Posterior cingulate gyrus (tissue), 11 donors: ENCODE measurements at regions of chr16 and their contacts with region 1.

Region 1: GRCh38 chr16:9660898-9661297 is 521.3 kb downstream of the GRIN2A start:
- DNase-seq: no peak

Region 2: GRCh38 chr16:9612267-9612666 is 48.6 kb before region 1 on chr16:
- intact Hi-C with region 1: loop called (anchors 5 kb)
- DNase-seq: no peak

Region 3: GRCh38 chr16:9713156-9713555 is 52.3 kb after region 1 on chr16:
- intact Hi-C with region 1: no loop called
- DNase-seq: no peak

Region 4: GRCh38 chr16:9836118-9836736 is 175.3 kb after region 1 on chr16:
- intact Hi-C with region 1: no loop called
- DNase-seq: peak in 1 of 10 donors; percentile 18